Right ventricle myocardium superior (tissue), 1 donor: ENCODE measurements at regions of chr3 and their contacts with region 1.

Region 1: GRCh38 chr3:180116658-180117057 is 79.9 kb upstream of the PEX5L start:
- DNase-seq: no peak
- ATAC-seq: no peak

Region 2: DNA sequence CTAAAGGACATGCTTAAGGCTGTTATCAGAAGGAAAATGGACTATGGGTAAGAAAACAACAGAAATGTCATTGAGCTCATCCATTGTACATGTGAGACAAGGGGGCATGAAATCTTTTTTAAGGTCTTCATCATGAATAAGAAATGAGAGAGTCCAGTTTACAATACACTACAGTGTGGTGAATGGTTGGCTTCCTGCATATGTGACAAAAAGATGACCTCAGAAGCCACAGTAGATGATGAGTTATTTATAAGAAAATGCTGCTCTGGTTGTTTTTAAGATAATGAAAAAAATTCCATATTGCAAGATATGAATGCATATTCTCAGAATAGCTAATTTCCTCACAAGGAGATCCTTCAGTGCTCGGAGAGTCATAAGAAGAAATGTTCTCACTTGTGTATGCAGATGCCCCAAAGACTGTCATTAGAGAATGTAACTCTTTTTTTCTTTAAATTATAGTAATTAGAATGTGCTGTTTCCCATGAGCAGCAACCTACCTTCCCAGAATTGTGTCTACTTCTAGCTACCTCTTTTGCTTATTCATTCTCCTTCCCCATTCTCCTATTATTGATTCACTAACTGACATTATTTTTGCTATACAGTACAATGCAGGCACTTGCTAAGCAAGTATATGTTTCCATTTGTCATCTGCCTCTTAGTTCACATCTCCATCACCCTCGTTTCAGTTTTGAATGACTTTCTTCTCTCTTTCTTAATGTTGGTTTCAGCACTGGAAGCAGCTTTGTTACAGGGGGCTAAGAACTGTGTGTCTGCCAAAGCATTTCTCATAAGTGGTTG is 72.1 kb after region 1 on chr3:
- intact Hi-C with region 1: loop called (anchors 5 kb)
- DNase-seq: no peak
- ATAC-seq: no peak

Region 3: DNA sequence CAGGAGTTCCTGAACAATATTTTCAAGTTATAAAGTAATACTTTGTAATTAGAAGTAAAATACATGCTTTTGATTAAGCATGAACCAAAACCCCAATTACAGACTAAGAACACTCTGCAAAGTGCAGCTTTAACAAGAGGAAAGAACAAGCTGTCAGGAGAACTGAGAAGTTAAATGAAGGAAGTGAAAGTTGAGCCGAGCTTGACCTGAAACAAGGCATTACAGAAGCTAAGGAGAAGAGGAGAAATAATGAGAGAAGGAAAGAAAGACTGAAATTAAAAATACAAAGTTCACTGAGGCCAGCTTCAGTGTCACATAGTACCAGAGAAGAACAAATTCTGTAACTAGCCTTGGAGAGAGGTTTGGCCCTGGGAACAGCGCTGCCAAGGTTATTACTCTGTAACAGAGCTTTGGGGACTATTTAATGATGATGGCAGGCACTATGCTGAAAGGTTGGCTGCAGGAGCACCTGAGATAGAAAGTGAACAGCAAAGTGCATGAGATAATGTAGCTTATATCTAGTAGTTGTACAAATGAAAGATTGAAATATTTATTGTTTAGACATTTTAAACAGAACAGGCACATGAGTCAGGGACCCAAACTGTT is 162.0 kb after region 1 on chr3:
- intact Hi-C with region 1: no loop called
- DNase-seq: no peak
- ATAC-seq: no peak